Gastrocnemius medialis (tissue), 4 donors: ENCODE measurements at regions of chr6 and their contacts with region 1.

Region 1: DNA sequence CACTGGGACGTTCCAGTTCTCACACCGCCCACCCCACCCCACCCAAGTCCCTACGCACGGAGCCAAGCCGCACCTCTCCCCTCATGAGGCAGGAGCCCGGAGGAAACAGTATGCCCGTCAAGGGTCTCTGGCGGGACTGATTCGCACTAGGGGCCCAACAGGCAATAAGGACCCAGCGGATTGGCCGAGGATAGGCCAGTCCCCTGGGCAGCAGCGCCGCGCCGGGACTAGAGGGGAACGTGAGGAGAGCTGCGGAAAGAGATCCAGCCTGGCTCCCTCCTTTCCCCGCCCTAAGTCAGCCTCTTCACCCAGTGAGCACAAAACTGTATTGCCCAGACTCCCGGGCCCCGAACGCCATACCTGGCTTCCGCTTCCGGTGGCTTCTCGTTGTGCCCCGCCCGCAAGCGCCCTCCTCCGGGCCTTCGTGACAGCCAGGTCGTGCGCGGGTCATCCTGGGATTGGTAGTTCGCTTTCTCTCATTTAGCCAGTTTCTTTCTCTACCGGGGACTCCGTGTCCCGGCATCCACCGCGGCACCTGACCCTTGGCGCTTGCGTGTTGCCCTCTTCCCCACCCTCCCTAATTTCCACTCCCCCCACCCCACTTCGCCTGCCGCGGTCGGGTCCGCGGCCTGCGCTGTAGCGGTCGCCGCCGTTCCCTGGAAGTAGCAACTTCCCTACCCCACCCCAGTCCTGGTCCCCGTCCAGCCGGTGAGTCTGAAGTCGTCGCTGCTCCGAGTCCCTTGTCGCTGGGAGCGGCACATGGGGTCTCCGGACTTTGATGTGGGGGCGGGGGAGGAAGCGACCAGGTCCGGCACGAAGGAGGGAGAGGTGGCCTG is at the start of gene CSNK2B:
- DNase-seq: peak; percentile 99
- ATAC-seq: peak; percentile 86
- H3K4me3 ChIP-seq: peak within 1 kb of the TSS; percentile 83 to 98 (median 94)
- H3K27ac ChIP-seq: peak within 1 kb of the TSS; percentile 93 to 100 (median 97)
- H3K4me1 ChIP-seq: peaks cover 25 to 36% of the 10 kb centered on the region in 2 donors
- H3K27me3 ChIP-seq: no peaks in the 10 kb centered on the region
- CTCF ChIP-seq: peak in 1 of 5 experiments; percentile 19
- POLR2A ChIP-seq: peak; percentile 72
- total RNA-seq, gene CSNK2B: 185 to 251 (median 226) TPM

Region 2: DNA sequence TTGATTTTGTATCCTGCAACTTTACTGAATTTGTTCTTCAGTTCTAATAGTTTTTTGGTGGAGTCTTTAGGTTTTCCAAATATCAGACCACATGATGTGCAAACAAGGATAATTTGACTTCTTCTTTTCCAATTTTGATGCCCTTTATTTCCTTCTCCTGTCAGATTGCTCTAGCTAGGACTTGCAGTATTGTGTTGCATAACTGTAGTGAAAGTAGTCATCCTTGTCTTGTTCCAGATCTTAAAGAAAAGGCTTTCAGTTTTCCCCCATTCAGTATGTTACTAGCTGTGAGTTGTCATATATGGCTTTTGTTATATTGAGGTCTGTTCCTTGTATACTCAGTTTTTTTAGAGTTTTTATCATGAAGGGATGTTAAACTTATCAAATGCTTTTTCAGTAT is 163.1 kb before region 1 on chr6:
- in situ Hi-C with region 1: no loop called
- intact Hi-C with region 1: no loop called
- DNase-seq: no peak
- ATAC-seq: no peak
- H3K4me3 ChIP-seq: no peak overlapping the region
- H3K27ac ChIP-seq: no peak overlapping the region
- H3K4me1 ChIP-seq: peaks cover 0 to 4% of the 10 kb centered on the region in 2 donors
- H3K27me3 ChIP-seq: peaks cover 11 to 28% (median 22%) of the 10 kb centered on the region in 3 donors
- CTCF ChIP-seq: no peak
- POLR2A ChIP-seq: no peak

Region 3: DNA sequence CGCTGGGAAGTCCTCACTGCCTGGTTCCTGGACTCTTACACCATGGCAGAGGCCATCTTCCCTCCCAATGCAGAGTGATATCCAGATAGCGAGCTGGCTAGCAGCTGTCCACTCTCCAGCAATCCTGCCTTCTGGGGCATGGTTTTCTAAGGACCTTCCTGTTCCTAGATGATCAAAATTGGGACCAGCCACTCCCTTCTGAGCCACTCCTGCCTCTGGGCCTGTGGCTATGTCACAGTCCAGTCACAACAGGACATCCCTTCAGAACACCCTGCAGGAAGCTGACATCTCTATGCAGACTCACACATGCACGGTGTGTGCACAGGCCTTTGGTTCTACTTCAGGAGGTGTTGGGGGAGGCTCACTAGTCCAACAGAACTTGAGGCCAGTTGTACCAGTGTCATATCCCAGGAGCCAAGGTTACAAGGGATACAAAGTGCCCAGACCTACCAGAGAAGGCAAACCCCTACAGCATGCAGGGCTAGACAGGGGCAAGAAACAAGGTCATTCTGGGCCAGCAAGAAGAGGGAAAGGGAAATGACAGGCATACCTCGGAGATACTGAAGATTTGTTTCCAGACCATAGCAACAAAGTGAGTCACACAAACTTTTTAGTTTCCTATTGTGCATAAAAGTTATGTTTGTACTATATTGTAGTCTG is 139.7 kb before region 1 on chr6:
- in situ Hi-C with region 1: no loop called
- intact Hi-C with region 1: no loop called
- DNase-seq: no peak
- ATAC-seq: no peak
- H3K4me3 ChIP-seq: no peak overlapping the region
- H3K27ac ChIP-seq: no peak overlapping the region
- H3K4me1 ChIP-seq: no peaks in the 10 kb centered on the region
- H3K27me3 ChIP-seq: no peaks in the 10 kb centered on the region
- CTCF ChIP-seq: no peak
- POLR2A ChIP-seq: no peak

Region 4: DNA sequence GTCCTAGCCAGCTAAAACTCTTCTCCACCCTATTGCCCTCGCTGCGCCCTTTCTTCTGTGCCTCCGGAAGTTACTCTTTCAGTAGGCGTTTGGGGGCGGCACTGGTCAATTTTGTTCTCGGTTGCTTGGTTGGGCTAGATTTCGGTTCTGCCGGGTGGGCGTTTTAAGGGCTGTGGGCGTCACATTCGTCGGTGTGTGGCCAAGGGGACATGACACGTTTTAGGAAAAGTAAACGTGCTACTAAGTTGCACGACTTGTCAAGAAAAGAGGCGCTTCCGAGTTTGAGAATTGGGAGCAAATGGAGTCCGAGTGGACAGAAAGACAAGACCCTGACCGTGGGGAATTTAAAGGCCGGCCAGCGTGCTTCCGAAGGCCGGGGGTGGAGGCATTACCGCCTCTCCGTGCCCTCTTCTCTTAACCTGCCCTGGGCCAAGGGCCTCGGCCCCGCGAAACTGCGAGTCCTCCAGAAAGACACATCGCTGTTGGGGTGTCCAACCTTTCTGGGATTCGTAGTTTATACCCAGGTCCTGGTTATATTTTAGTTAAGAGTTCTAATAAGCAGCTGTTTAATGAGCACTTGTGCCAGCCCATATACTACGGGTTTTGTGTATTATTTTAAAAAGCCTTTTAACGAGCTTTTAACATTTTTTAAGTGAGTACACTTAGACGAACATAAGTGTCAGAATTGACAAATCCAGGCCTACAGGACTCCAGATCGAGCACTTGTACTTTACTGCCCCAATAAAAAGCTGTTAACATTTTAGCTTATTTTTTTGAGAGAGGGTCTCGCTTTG is 12.6 kb before region 1 on chr6:
- in situ Hi-C with region 1: no loop called
- intact Hi-C with region 1: loop called (anchors 1 kb)
- DNase-seq: peak; percentile 81 to 88
- ATAC-seq: peak; percentile 83 to 87
- H3K4me3 ChIP-seq: peak overlapping the region; percentile 79 to 90 (median 84)
- H3K27ac ChIP-seq: peak overlapping the region; percentile 95 to 99 (median 98)
- H3K4me1 ChIP-seq: peaks cover 23 to 24% of the 10 kb centered on the region in 2 donors
- H3K27me3 ChIP-seq: no peaks in the 10 kb centered on the region
- CTCF ChIP-seq: no peak
- POLR2A ChIP-seq: peak; percentile 55 to 78

Region 5: GRCh38 chr6:31680840-31681671 is 15.3 kb after region 1 on chr6 and contains the start of gene LY6G5C:
- in situ Hi-C with region 1: no loop called
- intact Hi-C with region 1: loop called (anchors 1 kb)
- DNase-seq: peak; percentile 77 to 82
- ATAC-seq: peak; percentile 97
- H3K4me3 ChIP-seq: peak within 1 kb of the TSS; percentile 43 to 85 (median 66)
- H3K27ac ChIP-seq: peak within 1 kb of the TSS; percentile 22 to 74 (median 56)
- H3K4me1 ChIP-seq: peaks cover 13% of the 10 kb centered on the region in 2 donors
- H3K27me3 ChIP-seq: no peaks in the 10 kb centered on the region
- CTCF ChIP-seq: peak; percentile 60 to 80 (median 76)
- POLR2A ChIP-seq: no peak
- total RNA-seq, gene LY6G5C: 1.3 to 3.2 TPM in 2 of 4 donors, not detected in the others